Activated CD4-positive, alpha-beta memory T cell treated with anti-CD3 and anti-CD28 coated beads, Interleukin-2, amount 10 ng/mL, durations not matched to agents 7 days and 5 days (primary cell): ENCODE measurements at regions of chr11 and their contacts with region 1.

Region 1: DNA sequence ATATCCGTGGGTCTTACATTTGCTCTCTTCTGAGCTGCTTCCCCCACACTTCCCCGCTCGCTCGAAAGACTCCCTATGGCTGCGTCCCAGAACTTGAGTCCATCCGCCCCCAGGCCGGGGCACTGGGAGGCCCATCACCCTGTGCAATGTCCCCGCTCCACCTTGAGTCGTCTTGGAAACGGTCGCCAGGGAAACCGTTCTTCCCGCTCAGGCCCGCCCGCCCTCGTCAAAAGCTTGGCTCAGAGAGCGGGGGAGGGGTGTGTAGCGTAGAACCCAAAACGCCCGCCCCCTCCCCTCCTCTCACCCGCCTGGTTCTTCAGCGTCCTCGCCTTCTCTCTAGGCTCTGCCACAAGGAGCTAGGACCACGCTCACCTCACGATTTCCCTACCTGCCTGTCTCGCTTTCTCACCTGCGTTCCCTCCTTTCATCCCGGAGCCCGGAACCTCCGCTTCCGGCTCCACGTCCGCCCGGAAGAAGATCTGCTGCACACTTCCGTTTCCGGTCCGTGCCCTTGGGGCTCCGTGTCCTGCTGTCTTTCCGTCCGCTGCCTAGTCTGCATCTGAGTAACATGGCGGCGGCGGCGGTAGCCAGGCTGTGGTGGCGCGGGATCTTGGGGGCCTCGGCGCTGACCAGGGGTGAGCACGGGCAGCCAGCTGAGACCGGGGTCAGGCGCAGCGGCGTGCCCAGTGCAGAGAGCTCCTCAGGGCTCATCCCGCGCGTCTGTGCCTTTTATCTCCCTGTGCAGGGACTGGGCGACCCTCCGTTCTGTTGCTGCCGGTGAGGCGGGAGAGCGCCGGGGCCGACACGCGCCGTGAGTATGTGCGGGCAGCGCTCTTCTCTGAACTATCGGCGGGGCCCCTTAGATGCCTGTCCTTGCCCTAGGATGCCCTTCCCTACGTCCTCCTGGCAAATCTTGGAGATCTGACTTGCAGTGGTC is at the starts of genes KBTBD4 and NDUFS3:
- DNase-seq: peak; percentile 90
- H3K4me3 Mint-ChIP-seq: peak within 1 kb of the TSS; percentile 91
- H3K27ac Mint-ChIP-seq: peak within 1 kb of the TSS; percentile 86
- H3K4me1 Mint-ChIP-seq: peaks cover 37% of the 10 kb centered on the region
- H3K27me3 Mint-ChIP-seq: no peaks in the 10 kb centered on the region
- total RNA-seq, gene KBTBD4: 18.1 to 18.2 TPM
- total RNA-seq, gene NDUFS3: 95.6 to 99.9 TPM

Region 2: GRCh38 chr11:47552566-47553416 is 26.0 kb before region 1 on chr11 and contains the start of gene CELF1:
- CTCF ChIA-PET with region 1: interaction called, 7 read pairs
- POLR2A ChIA-PET with region 1: interaction called, 23 read pairs
- DNase-seq: peak; percentile 94
- H3K4me3 Mint-ChIP-seq: peak within 1 kb of the TSS; percentile 96
- H3K27ac Mint-ChIP-seq: peak within 1 kb of the TSS; percentile 89
- H3K4me1 Mint-ChIP-seq: peaks cover 41% of the 10 kb centered on the region
- H3K27me3 Mint-ChIP-seq: no peaks in the 10 kb centered on the region
- total RNA-seq, gene CELF1: 104 to 105 TPM

Region 3: GRCh38 chr11:47565340-47566148 is 13.2 kb before region 1 on chr11 and contains the start of gene PTPMT1:
- CTCF ChIA-PET with region 1: interaction called, 9 read pairs
- POLR2A ChIA-PET with region 1: interaction called, 85 read pairs
- DNase-seq: peak; percentile 72
- H3K4me3 Mint-ChIP-seq: peak within 1 kb of the TSS; percentile 79
- H3K27ac Mint-ChIP-seq: peak within 1 kb of the TSS; percentile 65
- H3K4me1 Mint-ChIP-seq: peaks cover 25% of the 10 kb centered on the region
- H3K27me3 Mint-ChIP-seq: no peaks in the 10 kb centered on the region
- total RNA-seq, gene PTPMT1: 42.3 to 45.2 TPM

Region 4: GRCh38 chr11:47593934-47594855 is 15.4 kb after region 1 on chr11 and contains the start of gene C1QTNF4:
- CTCF ChIA-PET with region 1: no interaction called
- POLR2A ChIA-PET with region 1: interaction called, 13 read pairs
- DNase-seq: no peak
- H3K4me3 Mint-ChIP-seq: no peak within 1 kb of the TSS
- H3K27ac Mint-ChIP-seq: no peak within 1 kb of the TSS
- H3K4me1 Mint-ChIP-seq: peaks cover 13% of the 10 kb centered on the region
- H3K27me3 Mint-ChIP-seq: peaks cover 35% of the 10 kb centered on the region
- total RNA-seq, gene C1QTNF4: 0.25 to 0.68 TPM

Region 5: GRCh38 chr11:47616726-47617416 is 38.1 kb after region 1 on chr11:
- CTCF ChIA-PET with region 1: no interaction called
- POLR2A ChIA-PET with region 1: no interaction called
- DNase-seq: peak; percentile 23
- H3K4me3 Mint-ChIP-seq: no peak overlapping the region
- H3K27ac Mint-ChIP-seq: no peak overlapping the region
- H3K4me1 Mint-ChIP-seq: peaks cover 13% of the 10 kb centered on the region
- H3K27me3 Mint-ChIP-seq: no peaks in the 10 kb centered on the region

Region 6: DNA sequence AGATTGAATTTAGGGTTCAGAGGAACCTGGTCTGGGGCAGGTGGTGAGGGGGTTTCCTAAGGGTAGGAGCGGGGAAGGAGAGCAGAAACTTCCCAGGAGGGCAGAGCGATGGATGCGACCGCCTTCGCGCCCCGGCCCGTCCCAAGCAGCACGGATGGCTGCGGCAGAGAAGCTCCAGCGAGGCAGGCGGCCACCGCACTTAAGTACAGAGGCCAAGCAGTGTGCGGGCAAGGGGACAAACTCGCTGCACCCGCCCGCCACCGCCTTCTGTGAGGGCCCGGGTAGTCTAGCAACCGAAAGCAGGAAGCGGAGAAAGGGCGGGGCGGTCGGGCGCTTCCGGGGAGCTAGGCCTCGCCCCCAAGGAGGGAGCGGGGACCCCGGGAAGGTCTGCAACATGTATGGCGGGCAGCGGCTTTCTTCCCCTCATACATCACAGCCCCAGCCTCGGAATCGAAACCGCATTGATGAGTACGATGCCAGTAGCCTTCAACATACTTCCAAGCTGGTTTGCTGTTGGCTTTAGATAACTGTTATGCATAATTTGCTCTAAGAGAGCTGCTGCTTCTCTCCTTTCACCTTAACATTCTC is 136.4 kb after region 1 on chr11 and contains the start of gene AGBL2:
- CTCF ChIA-PET with region 1: interaction called, 4 read pairs
- POLR2A ChIA-PET with region 1: interaction called, 23 read pairs
- DNase-seq: peak; percentile 89
- H3K4me3 Mint-ChIP-seq: peak within 1 kb of the TSS; percentile 87
- H3K27ac Mint-ChIP-seq: peak within 1 kb of the TSS; percentile 91
- H3K4me1 Mint-ChIP-seq: peaks cover 34% of the 10 kb centered on the region
- H3K27me3 Mint-ChIP-seq: no peaks in the 10 kb centered on the region
- total RNA-seq, gene AGBL2: 5.9 to 7.7 TPM